Activated naive CD4-positive, alpha-beta T cell treated with anti-CD3 and anti-CD28 coated beads, Interleukin-2, amount 10 ng/mL, durations not matched to agents 7 days and 5 days (primary cell): ENCODE measurements at regions of chr11 and their contacts with region 1.

Region 1: DNA sequence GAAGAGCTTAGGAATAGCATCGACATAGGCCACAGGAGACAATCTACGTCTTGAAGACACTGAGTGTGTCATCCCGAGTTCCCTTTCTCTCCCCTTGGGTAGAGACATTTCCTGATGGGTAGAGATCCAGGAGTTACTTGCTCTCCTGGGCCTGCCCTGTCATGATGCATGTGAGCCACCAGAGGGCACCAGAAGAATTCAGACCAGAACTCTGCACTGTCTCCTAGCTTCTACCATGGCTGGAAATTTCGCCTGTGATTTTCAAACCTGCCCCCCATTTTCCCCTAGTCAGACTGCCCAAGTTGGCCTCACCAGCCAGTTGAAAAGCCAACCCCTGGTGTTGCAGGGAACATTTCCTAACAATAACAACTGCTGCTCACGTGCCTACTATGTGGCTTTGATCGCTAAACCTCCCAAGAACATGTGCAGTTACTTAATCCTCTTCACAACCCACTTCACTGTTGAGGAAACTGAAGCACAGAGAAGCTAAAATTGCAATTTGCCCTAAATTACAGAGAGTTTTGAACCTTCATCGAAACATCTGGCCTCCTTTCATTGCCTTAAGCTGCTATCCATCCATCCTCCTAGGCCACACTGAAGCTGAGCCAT is 47.2 kb downstream of the C11orf58 start:
- DNase-seq: peak; percentile 64
- H3K4me3 Mint-ChIP-seq: no peak overlapping the region
- H3K27ac Mint-ChIP-seq: no peak overlapping the region
- H3K4me1 Mint-ChIP-seq: no peaks in the 10 kb centered on the region
- H3K27me3 Mint-ChIP-seq: peaks cover 4% of the 10 kb centered on the region

Region 2: DNA sequence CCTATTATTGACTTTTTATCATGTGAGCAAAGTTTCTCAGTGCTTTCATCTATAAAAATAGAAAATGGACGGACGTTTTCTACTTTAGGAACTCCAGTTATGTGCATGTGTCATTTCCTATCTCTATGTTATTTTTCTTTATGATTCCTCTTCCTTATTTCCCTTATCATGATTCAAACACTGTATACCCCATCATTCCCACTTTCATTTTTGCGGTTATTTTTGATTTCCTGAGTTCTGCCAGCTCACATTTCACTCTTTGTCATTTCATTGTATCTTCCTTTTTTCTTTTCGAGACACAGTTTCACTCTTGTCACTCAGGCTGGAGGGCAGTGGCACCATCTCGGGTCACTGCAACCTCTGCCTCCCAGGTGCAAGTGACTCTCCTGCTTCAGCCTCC is 25.8 kb before region 1 on chr11:
- CTCF ChIA-PET with region 1: no interaction called
- DNase-seq: no peak
- H3K4me3 Mint-ChIP-seq: no peak overlapping the region
- H3K27ac Mint-ChIP-seq: no peak overlapping the region
- H3K4me1 Mint-ChIP-seq: peaks cover 9% of the 10 kb centered on the region
- H3K27me3 Mint-ChIP-seq: peaks cover 7% of the 10 kb centered on the region

Region 3: GRCh38 chr11:16773981-16774935 is 11.4 kb before region 1 on chr11:
- CTCF ChIA-PET with region 1: interaction called, 19 read pairs
- DNase-seq: no peak
- H3K4me3 Mint-ChIP-seq: no peak overlapping the region
- H3K27ac Mint-ChIP-seq: no peak overlapping the region
- H3K4me1 Mint-ChIP-seq: no peaks in the 10 kb centered on the region
- H3K27me3 Mint-ChIP-seq: peaks cover 19% of the 10 kb centered on the region

Region 4: GRCh38 chr11:16801288-16801980 is 15.8 kb after region 1 on chr11:
- CTCF ChIA-PET with region 1: interaction called, 21 read pairs
- DNase-seq: no peak
- H3K4me3 Mint-ChIP-seq: no peak overlapping the region
- H3K27ac Mint-ChIP-seq: no peak overlapping the region
- H3K4me1 Mint-ChIP-seq: no peaks in the 10 kb centered on the region
- H3K27me3 Mint-ChIP-seq: no peaks in the 10 kb centered on the region

Region 5: DNA sequence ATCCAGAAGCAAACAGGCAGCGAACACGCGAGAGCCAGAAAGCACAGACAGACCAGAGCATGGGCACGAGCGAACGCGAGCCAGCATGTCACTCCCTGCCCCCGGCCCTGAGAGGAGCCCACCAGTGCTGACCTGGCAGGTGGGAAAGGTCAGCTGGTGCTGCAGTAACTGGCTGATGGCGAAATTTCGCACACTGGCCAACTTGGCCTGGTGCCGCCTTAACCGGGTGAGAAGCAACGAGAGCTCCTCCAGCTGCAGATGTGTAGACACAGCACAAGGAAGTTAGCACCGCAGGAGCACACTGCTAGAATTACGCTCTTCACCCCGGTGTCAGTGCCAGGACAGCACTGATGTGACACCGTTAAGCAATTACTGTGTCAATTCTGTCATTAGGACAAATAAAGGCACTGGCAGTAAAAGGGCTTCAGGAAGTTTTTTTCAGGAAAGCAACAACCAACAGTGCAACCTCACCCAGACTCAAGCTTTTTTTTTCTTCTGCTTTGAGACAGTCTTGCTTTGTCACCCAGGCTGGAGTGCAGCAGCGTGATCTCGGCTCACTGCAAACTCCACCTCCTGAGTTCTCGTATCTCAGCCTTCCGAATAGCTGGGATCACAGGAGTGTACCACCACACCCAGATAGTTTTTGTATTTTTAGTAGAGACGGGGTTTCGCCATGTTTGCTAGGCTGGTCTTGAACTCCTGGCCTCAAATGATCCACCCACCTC is 29.6 kb after region 1 on chr11:
- CTCF ChIA-PET with region 1: interaction called, 18 read pairs
- DNase-seq: no peak
- H3K4me3 Mint-ChIP-seq: no peak overlapping the region
- H3K27ac Mint-ChIP-seq: no peak overlapping the region
- H3K4me1 Mint-ChIP-seq: no peaks in the 10 kb centered on the region
- H3K27me3 Mint-ChIP-seq: peaks cover 3% of the 10 kb centered on the region

Region 6: GRCh38 chr11:16820324-16821092 is 34.9 kb after region 1 on chr11:
- CTCF ChIA-PET with region 1: interaction called, 18 read pairs
- DNase-seq: peak; percentile 77
- H3K4me3 Mint-ChIP-seq: no peak overlapping the region
- H3K27ac Mint-ChIP-seq: no peak overlapping the region
- H3K4me1 Mint-ChIP-seq: no peaks in the 10 kb centered on the region
- H3K27me3 Mint-ChIP-seq: peaks cover 13% of the 10 kb centered on the region

Region 7: DNA sequence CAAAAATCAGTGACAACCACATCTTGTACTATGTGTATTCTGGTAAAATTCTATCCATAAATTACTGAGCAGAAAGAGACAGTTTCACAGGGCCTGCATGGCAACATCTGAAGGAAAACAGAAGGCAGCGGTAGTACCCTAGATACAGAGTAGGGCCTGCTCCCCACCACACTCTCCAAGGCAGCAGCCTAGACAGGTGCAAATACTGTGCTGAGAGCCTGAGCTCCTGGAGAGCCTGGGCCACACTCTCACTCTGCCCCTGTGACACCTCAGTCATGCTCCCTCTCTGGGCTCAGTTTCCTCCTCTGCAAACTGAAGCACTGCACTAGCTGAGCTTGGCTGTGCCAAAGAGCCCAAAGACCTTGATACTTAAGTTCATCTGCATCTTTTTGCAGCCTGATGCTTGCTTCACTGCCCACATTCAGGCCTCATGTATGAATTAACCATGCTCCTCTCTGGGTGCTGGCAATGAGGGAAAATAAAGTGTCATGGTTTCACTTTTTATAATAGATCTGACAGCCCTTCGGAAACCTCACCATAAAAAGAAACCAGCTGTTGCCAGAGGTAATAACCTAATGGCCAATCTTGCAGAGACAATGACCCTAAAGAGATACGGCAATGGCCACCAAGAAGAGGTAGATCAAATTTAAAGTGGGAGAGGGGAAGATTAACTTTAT is 123.9 kb after region 1 on chr11:
- CTCF ChIA-PET with region 1: no interaction called
- DNase-seq: no peak
- H3K4me3 Mint-ChIP-seq: no peak overlapping the region
- H3K27ac Mint-ChIP-seq: no peak overlapping the region
- H3K4me1 Mint-ChIP-seq: no peaks in the 10 kb centered on the region
- H3K27me3 Mint-ChIP-seq: peaks cover 5% of the 10 kb centered on the region

Region 8: GRCh38 chr11:17063171-17064002 is 277.8 kb after region 1 on chr11:
- CTCF ChIA-PET with region 1: interaction called, 15 read pairs
- DNase-seq: peak; percentile 70
- H3K4me3 Mint-ChIP-seq: no peak overlapping the region
- H3K27ac Mint-ChIP-seq: no peak overlapping the region
- H3K4me1 Mint-ChIP-seq: no peaks in the 10 kb centered on the region
- H3K27me3 Mint-ChIP-seq: peaks cover 3% of the 10 kb centered on the region